Astrocyte of the cerebellum (primary cell): ENCODE measurements at regions of chr10 and their contacts with region 1.

Region 1: DNA sequence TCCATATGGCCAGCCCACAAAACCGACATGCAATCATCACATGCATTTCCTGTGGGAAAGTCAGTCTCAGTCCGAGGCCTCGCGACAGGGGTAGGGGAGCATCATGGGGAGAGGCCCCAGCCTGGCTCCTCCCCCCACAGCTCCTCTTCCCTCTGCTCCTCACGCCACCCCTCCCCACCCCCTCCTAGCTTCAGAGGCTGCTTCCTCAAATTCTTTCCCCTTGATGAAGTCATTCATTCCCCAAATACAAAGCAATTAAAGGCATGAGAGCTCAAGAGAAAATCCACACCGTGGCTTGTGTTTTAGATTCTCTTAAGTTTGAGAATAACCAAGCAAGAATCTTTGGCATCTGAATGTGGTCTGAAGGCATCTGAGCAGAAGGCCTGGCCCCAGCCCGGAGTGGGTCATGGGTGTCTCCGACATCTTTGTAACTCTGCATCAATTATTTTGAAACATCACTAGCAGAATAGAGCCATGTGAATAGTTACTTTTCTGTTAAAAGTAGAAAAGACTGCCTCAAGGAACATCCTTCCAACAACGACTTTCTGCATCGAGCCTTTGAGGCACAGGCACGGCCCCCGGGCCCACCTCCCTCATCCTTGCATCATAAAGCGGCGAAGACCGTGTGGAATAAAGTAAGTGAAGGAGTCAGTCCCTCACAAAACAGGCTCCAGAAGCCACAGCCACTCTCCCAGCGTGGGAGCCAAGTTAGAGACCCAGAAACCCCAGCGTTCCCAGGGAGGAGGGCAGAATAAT is 90.9 kb downstream of the DIP2C start:
- DNase-seq: peak; percentile 93
- H3K4me3 ChIP-seq: no peak overlapping the region
- CTCF ChIP-seq: no peak

Region 2: GRCh38 chr10:526651-527311 is 71.8 kb before region 1 on chr10:
- in situ Hi-C with region 1: loop called (anchors 5 kb)
- DNase-seq: no peak
- H3K4me3 ChIP-seq: no peak overlapping the region
- CTCF ChIP-seq: no peak

Region 3: DNA sequence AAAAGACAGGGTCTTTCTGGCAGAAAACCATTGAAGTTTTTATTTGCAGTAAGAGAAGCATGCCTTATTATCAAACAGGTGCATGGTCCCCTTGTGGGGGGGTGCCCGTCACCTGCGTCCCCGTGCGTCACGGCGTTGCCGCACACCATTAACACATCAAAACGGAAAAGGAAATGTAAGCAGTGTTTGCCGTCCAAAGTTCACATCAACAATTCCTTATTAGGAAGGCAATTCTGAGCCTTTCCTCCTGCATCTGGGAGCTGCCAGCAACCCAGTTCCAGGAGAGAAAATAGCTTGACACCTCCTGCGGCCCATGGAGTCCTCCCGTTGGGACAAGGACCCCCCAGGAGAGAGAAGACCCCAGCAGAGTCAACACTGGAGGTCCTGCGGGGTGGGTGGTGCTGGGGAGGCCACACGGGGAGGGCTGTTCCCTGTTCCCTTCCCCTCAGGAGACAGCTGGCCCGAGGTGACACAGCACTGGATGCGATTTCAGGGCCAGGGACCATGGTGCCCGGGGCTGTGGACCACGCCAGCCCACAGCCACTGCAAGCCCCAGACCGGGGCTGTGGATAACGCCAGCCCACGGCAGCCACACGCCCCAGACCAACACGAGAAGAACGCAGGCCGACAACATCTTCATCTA is 51.3 kb after region 1 on chr10:
- in situ Hi-C with region 1: no loop called
- DNase-seq: no peak
- H3K4me3 ChIP-seq: no peak overlapping the region
- CTCF ChIP-seq: no peak

Region 4: GRCh38 chr10:677750-678661 is 79.4 kb after region 1 on chr10:
- in situ Hi-C with region 1: loop called (anchors 10 kb)
- DNase-seq: no peak
- H3K4me3 ChIP-seq: no peak overlapping the region
- CTCF ChIP-seq: no peak